Heart right ventricle (tissue), 16 donors: ENCODE measurements at regions of chr9 and their contacts with region 1.

Region 1: DNA sequence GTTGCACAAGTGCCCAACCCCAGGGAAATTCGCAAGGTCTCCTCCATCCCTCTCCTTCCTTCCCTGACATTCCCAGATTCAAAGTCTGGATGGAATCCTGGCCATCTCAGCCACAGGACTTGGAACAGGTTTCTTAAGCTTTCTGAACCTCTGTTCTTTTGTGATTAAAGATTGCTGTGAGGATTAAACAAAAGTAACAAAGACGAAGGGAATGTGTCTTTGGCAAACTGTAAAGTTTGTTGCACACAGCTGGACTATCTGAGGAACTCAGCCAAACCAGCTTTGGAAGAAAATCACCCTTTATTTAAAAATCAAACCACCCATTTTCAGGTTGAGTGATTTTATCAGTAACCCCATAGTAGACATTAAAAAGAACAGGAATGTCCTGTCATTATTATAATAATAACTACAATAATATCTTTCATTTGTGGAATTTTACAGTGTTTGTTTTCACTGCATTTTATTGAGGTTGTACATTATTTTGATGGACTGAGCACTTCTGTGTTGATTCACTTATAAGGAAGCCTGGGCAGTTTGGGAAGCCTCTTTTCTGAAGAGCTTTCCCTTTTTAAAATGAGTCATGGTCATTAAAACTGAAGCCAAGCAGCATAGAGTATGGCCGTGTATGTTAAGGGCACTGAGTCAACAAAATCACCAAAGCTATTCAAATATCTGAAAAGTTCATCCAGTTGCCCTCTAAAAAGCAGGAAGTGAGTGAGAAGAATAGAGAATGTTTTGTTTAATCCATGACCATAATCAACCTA is 310.2 kb downstream of the AGTPBP1 start:
- DNase-seq: no peak
- ATAC-seq: peak in 2 of 8 donors; percentile 20
- H3K4me3 ChIP-seq: peak overlapping the region in 1 of 10 donors; percentile 26
- H3K27ac ChIP-seq: peak overlapping the region in 5 of 10 donors; percentile 27 to 77 (median 36)
- H3K4me1 ChIP-seq: peaks cover 0 to 23% (median 11%) of the 10 kb centered on the region in 9 donors
- H3K27me3 ChIP-seq: peaks cover 0 to 6% (median 0%) of the 10 kb centered on the region in 7 donors
- CTCF ChIP-seq: no peak

Region 2: DNA sequence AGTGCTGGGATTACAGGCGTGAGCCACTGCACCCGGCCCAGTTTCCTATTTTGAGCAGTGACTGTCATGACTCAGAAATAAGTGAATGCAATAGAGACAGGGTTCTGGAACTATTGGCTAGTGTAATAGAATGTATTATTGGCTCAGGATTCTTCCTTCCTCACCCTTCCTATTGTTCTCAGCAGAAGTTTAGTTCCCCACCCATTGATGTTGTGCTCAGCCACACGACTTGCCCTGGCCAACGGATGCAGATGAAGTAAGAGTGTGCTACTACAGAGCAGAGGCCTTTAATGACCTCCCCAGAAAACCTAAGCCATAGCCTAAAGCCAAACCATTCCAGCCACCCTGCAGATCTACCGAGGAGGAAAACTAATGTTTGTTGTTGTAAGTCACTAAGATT is 22.3 kb after region 1 on chr9:
- intact Hi-C with region 1: no loop called
- DNase-seq: peak in 1 of 2 donors; percentile 49
- ATAC-seq: peak; percentile 88 to 99 (median 94)
- H3K4me3 ChIP-seq: no peak overlapping the region
- H3K27ac ChIP-seq: peak overlapping the region in 5 of 10 donors; percentile 21 to 40 (median 36)
- H3K4me1 ChIP-seq: peaks cover 0 to 4% (median 0%) of the 10 kb centered on the region in 9 donors
- H3K27me3 ChIP-seq: no peaks in the 10 kb centered on the region
- CTCF ChIP-seq: no peak

Region 3: GRCh38 chr9:85502814-85503655 is 71.5 kb after region 1 on chr9:
- intact Hi-C with region 1: loop called in 1 of 10 experiments (anchors 10 kb)
- DNase-seq: no peak
- ATAC-seq: no peak
- H3K4me3 ChIP-seq: no peak overlapping the region
- H3K27ac ChIP-seq: no peak overlapping the region
- H3K4me1 ChIP-seq: no peaks in the 10 kb centered on the region
- H3K27me3 ChIP-seq: no peaks in the 10 kb centered on the region
- CTCF ChIP-seq: peak in 1 of 9 donors; percentile 13

Region 4: GRCh38 chr9:85522459-85523092 is 91.1 kb after region 1 on chr9:
- intact Hi-C with region 1: loop called in 1 of 10 experiments (anchors 5 kb)
- DNase-seq: peak; percentile 31 to 55
- ATAC-seq: peak; percentile 62 to 85 (median 80)
- H3K4me3 ChIP-seq: peak overlapping the region in 9 of 10 donors; percentile 17 to 58 (median 52)
- H3K27ac ChIP-seq: peak overlapping the region; percentile 36 to 88 (median 80)
- H3K4me1 ChIP-seq: peaks cover 3 to 49% (median 25%) of the 10 kb centered on the region in 9 donors
- H3K27me3 ChIP-seq: peaks cover 0 to 26% (median 4%) of the 10 kb centered on the region in 7 donors
- CTCF ChIP-seq: no peak

Region 5: GRCh38 chr9:85559526-85559925 is 128.0 kb after region 1 on chr9:
- intact Hi-C with region 1: no loop called
- DNase-seq: no peak
- ATAC-seq: no peak
- H3K4me3 ChIP-seq: no peak overlapping the region
- H3K27ac ChIP-seq: no peak overlapping the region
- H3K4me1 ChIP-seq: peaks cover 0 to 2% (median 0%) of the 10 kb centered on the region in 9 donors
- H3K27me3 ChIP-seq: no peaks in the 10 kb centered on the region
- CTCF ChIP-seq: no peak

Region 6: DNA sequence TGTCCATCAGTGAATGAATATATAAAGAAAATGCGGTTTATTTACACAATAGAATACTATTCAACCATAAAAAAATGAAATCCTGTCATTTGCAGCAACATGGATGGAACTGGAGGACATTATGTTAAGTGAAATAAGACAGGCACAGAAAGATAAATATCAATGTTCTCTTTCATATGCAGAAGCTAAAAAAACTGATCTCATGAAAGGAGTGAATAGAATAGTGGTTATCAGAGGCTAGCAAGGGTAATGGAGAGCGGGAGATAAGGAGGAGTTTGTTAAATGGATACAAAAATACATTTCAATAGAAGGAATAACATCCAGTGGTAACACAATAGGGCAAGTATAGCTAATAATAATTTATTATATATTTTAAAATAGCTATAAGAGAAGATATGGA is 245.3 kb after region 1 on chr9:
- intact Hi-C with region 1: no loop called
- DNase-seq: no peak
- ATAC-seq: no peak
- H3K4me3 ChIP-seq: no peak overlapping the region
- H3K27ac ChIP-seq: no peak overlapping the region
- H3K4me1 ChIP-seq: no peaks in the 10 kb centered on the region
- H3K27me3 ChIP-seq: no peaks in the 10 kb centered on the region
- CTCF ChIP-seq: no peak